ENCODE measurements at regions of chr1 and their contacts with region 1.

Region 1: DNA sequence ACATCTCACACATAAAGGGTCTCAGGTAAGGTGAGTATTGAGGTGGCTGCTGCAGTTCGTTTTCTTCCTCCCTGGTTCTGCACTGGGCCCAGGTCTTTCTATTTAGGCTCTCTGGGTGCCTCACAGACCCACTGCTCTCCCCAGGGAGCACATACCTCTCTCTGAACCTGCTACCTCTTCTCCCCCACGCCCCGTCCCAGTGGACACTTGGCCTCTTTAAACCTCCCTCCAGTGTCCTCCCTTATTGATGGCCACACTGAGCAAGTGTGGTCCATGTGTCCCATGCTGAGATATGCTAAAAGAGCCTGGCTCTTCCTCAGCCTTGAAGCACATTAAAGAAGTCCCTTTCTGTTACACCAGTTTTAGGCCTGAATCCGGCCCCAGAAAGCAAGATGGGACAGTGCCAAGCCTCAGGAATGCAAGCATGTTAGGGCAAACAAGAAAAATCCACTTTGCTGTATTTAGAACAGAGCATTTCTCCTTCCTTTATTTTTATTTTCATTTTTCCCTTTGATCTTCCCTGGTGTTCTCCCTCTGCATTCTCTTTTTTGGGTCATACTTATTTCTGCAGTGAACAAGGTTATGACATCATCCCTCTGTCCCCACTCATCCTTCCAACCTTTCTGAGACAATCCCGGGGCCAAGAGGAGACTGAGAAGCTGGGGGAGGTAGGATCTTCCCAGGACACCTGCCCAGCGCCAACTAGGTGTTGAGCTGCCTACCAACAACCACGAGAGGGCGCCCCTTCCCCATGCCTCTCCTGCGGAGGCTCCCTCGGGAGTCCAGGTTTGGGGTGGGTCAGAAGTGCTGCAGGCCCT is 5.0 kb upstream of the CHI3L2 start:
- DNase-seq: peak; percentile 70
- H3K4me3 Mint-ChIP-seq: peak overlapping the region; percentile 78
- H3K27ac Mint-ChIP-seq: peak overlapping the region; percentile 93
- H3K4me1 Mint-ChIP-seq: peaks cover 84% of the 10 kb centered on the region
- H3K27me3 Mint-ChIP-seq: no peaks in the 10 kb centered on the region

Region 2: GRCh38 chr1:110645821-110646735 is 576.4 kb before region 1 on chr1:
- intact Hi-C with region 1: loop called (anchors 1 kb)
- DNase-seq: no peak
- H3K4me3 Mint-ChIP-seq: peak overlapping the region; percentile 49
- H3K27ac Mint-ChIP-seq: peak overlapping the region; percentile 77
- H3K4me1 Mint-ChIP-seq: peaks cover 53% of the 10 kb centered on the region
- H3K27me3 Mint-ChIP-seq: no peaks in the 10 kb centered on the region

Region 3: DNA sequence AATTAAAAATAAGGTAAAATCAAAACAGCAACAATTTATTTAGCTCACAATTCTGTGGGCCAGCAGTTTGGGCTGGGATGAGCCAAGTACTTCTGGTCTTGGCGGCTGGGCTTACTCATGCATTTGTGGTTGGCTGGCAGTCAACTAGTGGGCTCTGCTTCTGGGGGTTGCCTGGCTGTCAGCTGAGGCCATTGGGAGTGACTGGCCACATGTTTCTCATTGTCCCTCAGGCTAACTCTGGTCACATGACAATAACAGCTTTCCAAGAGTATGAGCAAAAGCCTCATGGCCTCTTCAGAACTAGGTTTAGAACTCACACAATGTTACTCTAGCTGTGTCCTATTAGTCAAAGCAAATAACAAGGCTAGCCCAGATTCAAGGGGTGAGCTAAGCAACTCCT is 52.6 kb after region 1 on chr1:
- intact Hi-C with region 1: loop called (anchors 2 kb)
- DNase-seq: no peak
- H3K4me3 Mint-ChIP-seq: no peak overlapping the region
- H3K27ac Mint-ChIP-seq: no peak overlapping the region
- H3K4me1 Mint-ChIP-seq: peaks cover 16% of the 10 kb centered on the region
- H3K27me3 Mint-ChIP-seq: peaks cover 27% of the 10 kb centered on the region

Region 4: DNA sequence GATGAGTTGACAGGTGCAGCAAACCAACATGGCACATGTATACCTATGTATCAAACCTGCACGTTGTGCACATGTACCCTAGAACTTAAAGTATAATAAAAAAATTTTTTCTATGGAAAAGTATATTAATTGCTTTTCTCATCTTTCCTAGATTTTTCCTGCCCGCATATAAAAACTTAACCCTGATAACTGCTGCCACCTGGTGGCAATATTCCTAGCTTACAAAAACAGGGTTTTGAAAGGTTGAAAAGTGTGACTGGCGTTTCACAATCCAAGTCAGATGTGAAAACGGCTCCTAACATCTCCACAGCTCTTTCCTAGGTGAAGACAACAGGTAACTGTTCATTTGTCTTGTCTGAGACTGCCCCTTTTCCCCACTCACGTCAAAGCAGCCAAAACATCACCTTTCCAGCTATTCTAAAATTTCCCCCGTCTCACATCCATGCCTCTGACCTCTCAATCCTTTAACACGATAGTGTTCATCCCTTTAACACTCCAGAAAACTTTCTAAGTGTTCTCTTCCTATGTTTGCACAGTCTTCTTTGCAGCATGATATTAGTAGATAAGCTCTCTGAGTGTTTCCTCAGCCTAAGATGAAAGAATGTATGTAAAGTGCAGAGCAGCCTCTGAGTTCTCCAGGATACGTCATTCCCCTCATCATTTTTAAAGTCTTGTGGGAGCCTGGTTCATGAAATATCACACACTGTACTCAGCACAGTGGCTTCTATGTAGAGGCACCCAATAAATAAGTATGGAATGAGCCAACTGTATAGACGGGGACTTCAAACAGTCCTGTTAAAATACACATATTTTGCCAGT is 177.5 kb after region 1 on chr1:
- intact Hi-C with region 1: loop called (anchors 1 kb)
- DNase-seq: no peak
- H3K4me3 Mint-ChIP-seq: no peak overlapping the region
- H3K27ac Mint-ChIP-seq: no peak overlapping the region
- H3K4me1 Mint-ChIP-seq: peaks cover 10% of the 10 kb centered on the region
- H3K27me3 Mint-ChIP-seq: peaks cover 37% of the 10 kb centered on the region

Region 5: GRCh38 chr1:111481387-111482221 is 259.1 kb after region 1 on chr1:
- intact Hi-C with region 1: loop called (anchors 10 kb)
- DNase-seq: peak; percentile 42
- H3K4me3 Mint-ChIP-seq: no peak overlapping the region
- H3K27ac Mint-ChIP-seq: no peak overlapping the region
- H3K4me1 Mint-ChIP-seq: peaks cover 27% of the 10 kb centered on the region
- H3K27me3 Mint-ChIP-seq: peaks cover 9% of the 10 kb centered on the region